B cell (primary cell): ENCODE measurements at regions of chr21 and their contacts with region 1.

Region 1: DNA sequence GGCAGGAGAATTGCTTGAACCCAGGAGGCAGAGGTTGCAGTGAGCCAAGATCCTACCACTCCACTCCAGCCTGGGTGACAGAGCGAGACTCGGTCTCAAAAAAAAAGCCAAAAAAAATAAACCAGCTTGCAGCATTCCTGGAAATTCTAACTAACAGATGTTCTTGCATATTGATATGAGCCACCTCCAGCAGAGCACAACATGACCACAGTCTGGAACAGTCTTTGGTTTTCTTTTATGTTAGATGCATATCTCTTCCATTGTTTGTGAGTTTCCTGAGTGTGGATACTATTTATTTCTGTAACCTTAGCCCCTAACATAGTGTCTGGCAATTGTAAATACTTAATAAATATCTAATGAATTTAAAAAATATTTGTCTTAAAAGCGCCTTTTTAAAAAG is 23.9 kb downstream of the IFNAR1 start:
- DNase-seq: no peak
- ATAC-seq: no peak
- H3K4me3 ChIP-seq: no peak overlapping the region
- H3K4me3 Mint-ChIP-seq: no peak overlapping the region
- H3K27ac ChIP-seq: no peak overlapping the region
- H3K27ac Mint-ChIP-seq: no peak overlapping the region
- H3K4me1 ChIP-seq: peaks cover 10% of the 10 kb centered on the region in 2 donors
- H3K4me1 Mint-ChIP-seq: peaks cover 13% of the 10 kb centered on the region
- H3K27me3 ChIP-seq: no peaks in the 10 kb centered on the region
- H3K27me3 Mint-ChIP-seq: no peaks in the 10 kb centered on the region
- CTCF ChIP-seq: no peak

Region 2: DNA sequence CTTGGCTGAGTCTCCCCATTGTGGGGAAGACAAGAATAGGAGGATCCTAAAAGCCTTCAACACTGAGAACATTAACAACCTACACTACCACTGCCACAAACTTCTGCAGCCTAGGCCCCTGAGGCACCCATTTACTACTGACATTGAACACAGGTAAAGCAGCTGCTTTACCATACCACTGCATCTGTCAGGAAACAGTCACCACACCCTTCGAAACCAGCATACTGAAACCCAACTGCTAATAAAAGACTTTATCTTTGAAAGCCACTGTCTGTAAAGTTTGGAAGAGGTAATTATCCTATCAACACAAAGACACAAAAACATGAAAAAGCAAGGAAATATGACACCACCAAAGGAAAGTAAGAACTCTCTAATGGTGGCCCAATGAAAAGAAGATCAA is 16.6 kb before region 1 on chr21:
- CTCF ChIA-PET with region 1: interaction called, 4 read pairs
- POLR2A ChIA-PET with region 1: interaction called, 6 read pairs
- intact Hi-C with region 1: loop called (anchors 2 kb)
- DNase-seq: peak; percentile 60
- ATAC-seq: peak; percentile 77
- H3K4me3 ChIP-seq: peak overlapping the region in 2 of 5 experiments; percentile 19 to 37
- H3K4me3 Mint-ChIP-seq: peak overlapping the region; percentile 59
- H3K27ac ChIP-seq: peak overlapping the region; percentile 57 to 79
- H3K27ac Mint-ChIP-seq: peak overlapping the region; percentile 67
- H3K4me1 ChIP-seq: peaks cover 58 to 71% of the 10 kb centered on the region in 2 donors
- H3K4me1 Mint-ChIP-seq: peaks cover 70% of the 10 kb centered on the region
- H3K27me3 ChIP-seq: no peaks in the 10 kb centered on the region
- H3K27me3 Mint-ChIP-seq: no peaks in the 10 kb centered on the region
- CTCF ChIP-seq: no peak